Tibial artery (tissue), 4 donors: ENCODE measurements at regions of chr2 and their contacts with region 1.

Region 1: DNA sequence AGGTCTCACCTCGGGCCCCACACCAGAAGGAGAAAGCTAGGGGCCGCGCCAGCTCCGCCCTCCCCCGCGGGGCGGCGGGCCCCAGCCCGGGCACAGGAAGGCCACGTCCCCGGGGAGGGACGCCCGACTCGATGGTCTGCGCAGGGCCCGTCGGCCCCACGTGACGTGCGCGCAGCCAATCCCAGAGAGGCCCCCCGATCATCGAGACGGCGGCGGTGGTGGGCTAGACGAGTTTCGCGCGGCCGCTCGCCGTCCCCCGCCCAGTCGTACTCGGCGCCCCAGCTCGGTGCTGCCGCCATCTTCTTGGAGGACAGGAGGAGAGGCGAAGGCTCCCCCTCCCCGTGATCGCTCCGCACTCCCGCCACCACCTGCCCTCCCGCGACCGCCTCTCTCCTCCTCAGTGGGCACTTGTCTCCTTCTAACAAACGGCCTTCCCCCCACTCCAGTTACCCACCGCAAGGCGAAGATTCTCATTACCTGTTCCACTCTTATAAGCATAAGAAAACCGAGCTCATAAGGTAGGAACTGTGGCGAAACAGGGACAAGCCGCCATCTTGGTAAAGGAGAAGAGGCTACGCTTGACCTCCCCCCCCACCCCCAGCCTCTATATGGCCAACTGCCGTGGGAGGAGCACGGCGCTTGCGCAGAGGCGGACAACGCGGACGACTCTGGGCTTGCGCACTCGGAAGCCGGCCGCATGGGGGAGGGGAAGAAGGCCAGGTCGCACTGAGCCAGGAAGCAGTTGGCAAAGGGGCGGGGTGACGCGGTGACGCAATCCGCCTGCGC is at the start of gene HDLBP:
- DNase-seq: peak; percentile 99 to 100
- H3K4me3 ChIP-seq: peak within 1 kb of the TSS; percentile 96 to 99
- H3K27ac ChIP-seq: peak within 1 kb of the TSS; percentile 91 to 99
- H3K4me1 ChIP-seq: peaks cover 0 to 70% (median 44%) of the 10 kb centered on the region in 4 donors
- H3K27me3 ChIP-seq: no peaks in the 10 kb centered on the region
- CTCF ChIP-seq: peak; percentile 24 to 29

Region 2: GRCh38 chr2:241271641-241272297 is 43.5 kb before region 1 on chr2:
- intact Hi-C with region 1: loop called (anchors 1 kb)
- DNase-seq: peak; percentile 92 to 94
- H3K4me3 ChIP-seq: peak overlapping the region; percentile 93 to 99
- H3K27ac ChIP-seq: peak overlapping the region; percentile 97 to 99
- H3K4me1 ChIP-seq: peaks cover 0 to 48% (median 42%) of the 10 kb centered on the region in 4 donors
- H3K27me3 ChIP-seq: no peaks in the 10 kb centered on the region
- CTCF ChIP-seq: no peak